ENCODE measurements at regions of chr12 and their contacts with region 1.

Region 1: GRCh38 chr12:26614020-26614616 is 218.9 kb downstream of the ITPR2 start:
- DNase-seq: peak in 1 of 2 experiments; percentile 58
- H3K4me3 ChIP-seq: no peak overlapping the region
- H3K27ac ChIP-seq: no peak overlapping the region
- H3K4me1 ChIP-seq: no peaks in the 10 kb centered on the region
- H3K27me3 ChIP-seq: no peaks in the 10 kb centered on the region
- CTCF ChIP-seq: peak; percentile 23 to 80 (median 70)
- EP300 ChIP-seq: no peak
- POLR2A ChIP-seq: no peak
- RAD21 ChIP-seq: peak; percentile 73 to 80

Region 2: DNA sequence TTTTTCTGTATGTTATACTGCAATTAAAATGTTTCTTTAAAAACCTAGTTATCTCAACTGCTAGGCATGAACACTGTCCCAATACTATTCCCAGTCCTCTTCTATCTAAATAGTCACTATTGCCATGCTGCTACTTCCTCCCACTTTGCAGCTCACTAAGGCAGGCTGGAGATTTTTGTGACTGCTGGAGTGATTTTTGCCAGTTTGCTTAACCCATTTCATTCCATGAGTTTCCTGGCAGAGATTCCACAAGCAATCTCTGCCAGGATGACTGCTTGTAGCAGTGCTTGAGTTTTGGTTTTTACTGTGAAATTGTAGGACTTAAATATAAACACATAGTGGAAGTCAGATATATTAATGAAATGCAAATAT is 570.1 kb before region 1 on chr12:
- CTCF ChIA-PET with region 1: no interaction called
- POLR2A ChIA-PET with region 1: no interaction called
- DNase-seq: no peak
- H3K4me3 ChIP-seq: no peak overlapping the region
- H3K27ac ChIP-seq: no peak overlapping the region
- H3K4me1 ChIP-seq: peaks cover 0 to 18% (median 6%) of the 10 kb centered on the region in 4 experiments; a peak in 3 of 7 replicates
- H3K27me3 ChIP-seq: peaks cover 0 to 1% (median 0%) of the 10 kb centered on the region in 4 experiments; a peak in 1 of 7 replicates
- CTCF ChIP-seq: no peak
- EP300 ChIP-seq: no peak
- POLR2A ChIP-seq: no peak
- RAD21 ChIP-seq: no peak

Region 3: GRCh38 chr12:26493656-26494055 is 120.5 kb before region 1 on chr12:
- CTCF ChIA-PET with region 1: interaction called, 10 read pairs
- POLR2A ChIA-PET with region 1: no interaction called
- DNase-seq: no peak
- H3K4me3 ChIP-seq: no peak overlapping the region
- H3K27ac ChIP-seq: no peak overlapping the region
- H3K4me1 ChIP-seq: no peaks in the 10 kb centered on the region
- H3K27me3 ChIP-seq: no peaks in the 10 kb centered on the region
- CTCF ChIP-seq: no peak
- EP300 ChIP-seq: no peak
- POLR2A ChIP-seq: no peak
- RAD21 ChIP-seq: no peak

Region 4: GRCh38 chr12:26580619-26581018 is 33.5 kb before region 1 on chr12:
- CTCF ChIA-PET with region 1: interaction called, 11 read pairs
- POLR2A ChIA-PET with region 1: no interaction called
- DNase-seq: no peak
- H3K4me3 ChIP-seq: no peak overlapping the region
- H3K27ac ChIP-seq: no peak overlapping the region
- H3K4me1 ChIP-seq: no peaks in the 10 kb centered on the region; a peak in 1 of 7 replicates
- H3K27me3 ChIP-seq: no peaks in the 10 kb centered on the region
- CTCF ChIP-seq: no peak
- EP300 ChIP-seq: no peak
- POLR2A ChIP-seq: no peak
- RAD21 ChIP-seq: no peak

Region 5: GRCh38 chr12:26629864-26630263 is 15.7 kb after region 1 on chr12:
- CTCF ChIA-PET with region 1: interaction called, 31 read pairs
- POLR2A ChIA-PET with region 1: no interaction called
- DNase-seq: no peak
- H3K4me3 ChIP-seq: no peak overlapping the region
- H3K27ac ChIP-seq: no peak overlapping the region
- H3K4me1 ChIP-seq: peaks cover 0 to 5% (median 3%) of the 10 kb centered on the region in 4 experiments; a peak in 5 of 7 replicates
- H3K27me3 ChIP-seq: no peaks in the 10 kb centered on the region
- CTCF ChIP-seq: peak; percentile 33 to 39 (median 35); a peak in 3 of 4 replicates
- EP300 ChIP-seq: no peak
- POLR2A ChIP-seq: no peak
- RAD21 ChIP-seq: peak; percentile 54 to 67